ENCODE measurements at regions of chr11 and their contacts with region 1.

Region 1: DNA sequence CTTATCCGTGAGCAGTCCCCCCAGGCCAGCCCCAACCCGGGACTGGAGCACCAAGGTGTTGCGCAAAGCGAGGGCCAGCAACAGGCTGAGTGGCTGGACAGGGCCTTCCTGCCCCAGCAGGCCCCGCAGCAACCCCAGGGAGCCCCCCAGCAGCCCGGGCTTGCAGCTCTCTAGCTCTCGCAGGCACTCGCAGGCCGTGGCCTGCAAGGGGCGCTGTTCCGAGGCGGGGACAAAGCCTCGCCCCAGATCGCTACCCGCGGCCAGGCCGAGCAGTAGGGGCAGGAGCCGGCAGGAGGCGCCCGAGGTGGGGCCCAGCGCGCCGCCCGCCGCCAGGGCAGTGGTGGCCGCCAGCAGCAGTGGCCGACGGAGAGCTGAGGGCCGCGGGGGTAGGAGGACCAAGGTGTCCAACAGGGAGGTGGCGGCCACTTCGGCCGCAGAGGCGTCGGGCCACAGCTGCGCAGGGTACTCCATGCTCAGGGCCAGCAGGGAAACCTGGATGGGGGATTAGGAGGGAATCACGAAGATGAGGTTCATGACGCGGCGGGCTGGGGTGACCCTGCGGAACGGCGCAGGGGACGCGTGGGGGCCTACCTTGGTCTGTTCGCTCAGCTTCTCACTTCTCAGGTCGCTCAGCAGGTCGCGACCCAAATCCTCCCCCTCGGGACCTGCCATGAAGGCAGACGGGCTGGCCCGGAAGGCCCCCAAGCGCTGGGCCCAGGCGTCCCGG is 762 bp downstream of the AP5B1 start:
- DNase-seq: peak; percentile 97
- ATAC-seq: peak; percentile 77
- H3K4me3 Mint-ChIP-seq: peak overlapping the region; percentile 86
- H3K27ac Mint-ChIP-seq: peak overlapping the region; percentile 68; the same call in 1 of the 2 replicates
- H3K4me1 Mint-ChIP-seq: peaks cover 19% of the 10 kb centered on the region
- H3K27me3 Mint-ChIP-seq: peaks cover 32% of the 10 kb centered on the region
- CTCF ChIP-seq: peak; percentile 96

Region 2: DNA sequence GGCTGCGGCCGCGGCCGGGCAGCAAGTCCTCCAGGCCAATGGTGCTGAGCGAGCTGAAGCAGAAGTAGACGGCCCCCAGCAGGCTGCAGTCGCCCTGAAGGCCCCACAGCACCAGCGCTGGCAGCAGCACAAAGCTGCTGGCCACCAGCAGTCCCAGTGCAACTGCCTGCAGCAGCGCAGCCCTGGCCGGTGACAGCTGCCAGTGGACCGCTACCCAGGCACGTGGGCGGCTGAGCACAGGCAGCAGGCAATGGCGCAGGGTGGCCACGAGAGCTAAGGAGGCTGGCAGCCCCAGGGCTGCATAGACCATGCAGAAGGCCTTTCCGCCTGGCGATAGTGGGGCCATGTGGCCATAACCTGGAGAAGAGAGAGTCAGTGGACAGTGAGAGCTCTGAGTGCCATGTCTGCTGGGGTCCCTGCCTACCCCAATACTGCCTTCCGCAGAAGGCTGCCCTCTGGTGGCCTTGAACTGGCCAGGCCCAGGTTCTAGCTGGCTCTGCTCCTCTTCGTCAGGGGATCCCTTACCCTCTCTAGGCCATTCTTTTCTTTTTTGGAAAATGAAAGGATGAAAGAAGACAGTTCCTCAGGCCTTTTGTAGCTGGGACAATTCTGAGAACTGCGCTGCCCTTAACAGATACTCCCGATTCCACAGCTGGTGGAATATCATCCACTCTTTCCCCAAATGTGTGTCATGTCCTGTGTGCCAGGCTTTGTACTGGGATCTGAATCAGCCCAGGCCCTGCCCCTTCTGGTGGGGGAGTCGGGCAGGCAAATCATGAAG is 186.3 kb before region 1 on chr11:
- CTCF ChIA-PET with region 1: interaction called, 10 read pairs
- POLR2A ChIA-PET with region 1: no interaction called
- DNase-seq: peak; percentile 80
- ATAC-seq: peak; percentile 49
- H3K4me3 Mint-ChIP-seq: peak overlapping the region; percentile 65
- H3K27ac Mint-ChIP-seq: no peak overlapping the region
- H3K4me1 Mint-ChIP-seq: peaks cover 19% of the 10 kb centered on the region
- H3K27me3 Mint-ChIP-seq: peaks cover 49% of the 10 kb centered on the region
- CTCF ChIP-seq: peak; percentile 52

Region 3: DNA sequence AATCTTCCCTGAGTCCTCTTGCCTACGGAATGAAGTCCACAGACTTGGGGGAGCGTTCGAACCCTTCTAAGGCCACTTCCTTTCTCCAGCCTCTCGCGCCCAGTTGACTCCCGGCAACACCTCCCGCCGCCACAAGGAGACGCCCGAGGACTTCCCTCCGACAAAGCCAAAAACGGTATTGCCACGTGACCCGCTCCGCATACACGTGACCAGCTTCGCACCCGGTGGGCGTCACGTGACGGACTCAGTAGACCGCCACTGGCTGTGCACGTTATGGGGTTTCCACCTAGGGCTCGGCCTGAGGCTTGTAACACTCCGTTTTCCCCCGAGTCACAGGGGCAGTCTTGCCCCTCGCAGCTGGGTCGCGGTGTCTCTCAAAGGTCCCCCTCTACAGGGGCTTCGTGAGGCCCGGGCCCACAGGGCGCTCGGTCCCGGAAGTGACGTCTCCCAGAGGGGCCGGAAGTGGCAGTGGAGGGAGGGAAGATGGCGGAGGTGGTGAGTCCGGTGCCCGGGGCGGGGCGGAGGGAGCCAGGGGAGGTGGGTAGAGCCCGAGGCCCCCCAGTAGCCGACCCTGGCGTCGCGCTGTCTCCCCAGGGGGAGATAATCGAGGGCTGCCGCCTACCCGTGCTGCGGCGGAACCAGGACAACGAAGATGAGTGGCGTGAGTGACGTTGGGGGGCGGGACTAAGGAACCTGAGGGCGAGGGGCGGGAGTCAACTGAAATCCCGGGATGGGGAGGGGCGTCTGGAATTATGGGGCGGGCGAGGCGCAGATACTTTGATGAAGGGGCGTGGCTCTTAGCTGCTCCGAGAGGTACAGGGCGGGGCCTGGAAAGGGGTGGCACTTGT is 68.0 kb before region 1 on chr11 and contains the start of gene KAT5:
- CTCF ChIA-PET with region 1: interaction called, 48 read pairs
- POLR2A ChIA-PET with region 1: no interaction called
- DNase-seq: peak; percentile 99
- ATAC-seq: peak; percentile 93
- H3K4me3 Mint-ChIP-seq: peak within 1 kb of the TSS; percentile 82
- H3K27ac Mint-ChIP-seq: peak within 1 kb of the TSS; percentile 96
- H3K4me1 Mint-ChIP-seq: 0 out of 2 replicates have a peak, but pooled peaks cover 3% of the 10 kb centered on the region
- H3K27me3 Mint-ChIP-seq: peaks cover 6% of the 10 kb centered on the region
- CTCF ChIP-seq: peak; percentile 86
- total RNA-seq, gene KAT5: 44.9 to 56.6 TPM (median 46.0 TPM) in 3 replicates

Region 4: DNA sequence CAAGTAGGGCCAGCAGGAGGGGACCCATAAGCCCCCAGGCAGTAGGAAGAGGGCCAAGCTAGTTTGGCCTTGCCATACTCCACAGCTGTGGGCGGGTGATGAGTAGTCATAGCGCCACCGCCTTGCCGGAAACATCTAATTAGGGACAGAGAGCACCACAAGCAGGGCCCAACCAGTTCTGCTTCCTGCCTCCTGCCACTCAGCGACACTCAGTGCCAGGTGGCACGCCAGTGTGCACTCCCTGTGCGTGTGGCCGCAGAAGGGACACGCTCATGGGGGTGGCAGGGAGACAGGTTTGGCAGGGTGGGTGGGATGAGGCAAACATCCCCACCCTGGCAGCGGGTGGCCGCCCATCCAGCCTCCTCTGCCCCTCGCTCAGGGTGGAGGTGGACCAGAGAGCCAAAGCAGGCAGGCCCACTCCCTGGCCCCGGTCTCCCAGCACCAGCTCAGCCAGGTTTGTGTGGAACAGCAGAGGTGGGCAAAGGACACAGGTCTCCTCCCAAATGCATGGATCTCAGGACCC is 11.7 kb after region 1 on chr11:
- CTCF ChIA-PET with region 1: interaction called, 151 read pairs
- POLR2A ChIA-PET with region 1: interaction called, 6 read pairs
- DNase-seq: no peak
- ATAC-seq: no peak
- H3K4me3 Mint-ChIP-seq: no peak overlapping the region
- H3K27ac Mint-ChIP-seq: no peak overlapping the region
- H3K4me1 Mint-ChIP-seq: peaks cover 32% of the 10 kb centered on the region
- H3K27me3 Mint-ChIP-seq: peaks cover 18% of the 10 kb centered on the region
- CTCF ChIP-seq: no peak

Region 5: DNA sequence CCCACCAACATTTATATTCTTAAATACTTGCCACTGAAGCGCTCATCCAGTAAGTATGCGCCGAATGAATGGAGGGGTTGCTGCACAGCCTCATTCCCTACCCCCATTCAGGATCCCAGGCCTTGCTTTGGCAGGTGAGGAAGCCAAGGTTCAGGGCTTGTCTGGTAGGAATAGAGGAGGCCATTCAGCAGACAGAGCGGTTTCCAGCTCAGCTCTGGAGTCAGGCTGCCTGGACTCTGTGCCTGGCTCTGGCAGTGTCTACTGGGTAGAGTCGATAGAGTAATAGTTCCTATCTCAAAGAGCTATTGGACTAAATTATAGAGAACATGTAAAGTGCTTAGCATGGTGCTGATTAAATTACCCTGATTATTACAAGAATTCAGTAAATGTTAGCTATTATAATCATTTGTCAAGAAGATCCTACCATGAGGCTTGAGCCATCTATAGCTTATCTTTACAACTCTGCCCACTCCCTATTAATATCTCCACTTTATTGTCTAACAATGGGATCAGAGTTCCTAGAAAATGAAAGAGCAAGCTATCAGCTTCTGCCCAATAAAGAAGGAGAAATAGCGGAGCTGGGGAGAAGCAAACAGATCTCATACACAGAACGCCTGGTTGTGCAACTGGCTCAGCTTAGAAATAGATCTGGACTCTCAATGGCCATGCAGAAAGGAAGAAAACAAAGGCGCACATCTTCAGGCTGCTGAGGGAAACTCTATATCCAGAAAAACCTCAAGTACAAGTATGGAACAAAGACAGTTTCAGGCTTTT is 47.1 kb after region 1 on chr11:
- CTCF ChIA-PET with region 1: interaction called, 36 read pairs
- POLR2A ChIA-PET with region 1: no interaction called
- DNase-seq: no peak
- ATAC-seq: no peak
- H3K4me3 Mint-ChIP-seq: no peak overlapping the region
- H3K27ac Mint-ChIP-seq: no peak overlapping the region
- H3K4me1 Mint-ChIP-seq: peaks cover 4% of the 10 kb centered on the region; the same call in 1 of the 2 replicates
- H3K27me3 Mint-ChIP-seq: peaks cover 8% of the 10 kb centered on the region
- CTCF ChIP-seq: no peak

Region 6: GRCh38 chr11:65868076-65868667 is 88.2 kb after region 1 on chr11:
- CTCF ChIA-PET with region 1: interaction called, 11 read pairs
- POLR2A ChIA-PET with region 1: no interaction called
- DNase-seq: peak; percentile 73
- ATAC-seq: peak; percentile 78
- H3K4me3 Mint-ChIP-seq: peak overlapping the region; percentile 88
- H3K27ac Mint-ChIP-seq: no peak overlapping the region
- H3K4me1 Mint-ChIP-seq: peaks cover 10% of the 10 kb centered on the region
- H3K27me3 Mint-ChIP-seq: peaks cover 46% of the 10 kb centered on the region
- CTCF ChIP-seq: no peak